ENCODE measurements at regions of chr15 and their contacts with region 1.

Region 1: GRCh38 chr15:65869127-65869953 is at the start of gene RAB11A:
- DNase-seq: peak; percentile 90 to 97
- H3K4me3 ChIP-seq: peak within 1 kb of the TSS; percentile 85 to 99 (median 92)
- H3K27ac ChIP-seq: peak within 1 kb of the TSS; percentile 92
- H3K4me1 ChIP-seq: peaks cover 0 to 2% (median 0%) of the 10 kb centered on the region in 4 experiments; a peak in 2 of 7 replicates
- H3K27me3 ChIP-seq: no peaks in the 10 kb centered on the region
- CTCF ChIP-seq: peak; percentile 28 to 31 (median 30); a peak in 3 of 4 replicates
- EP300 ChIP-seq: no peak
- POLR2A ChIP-seq: peak; percentile 95 to 99
- RAD21 ChIP-seq: peak; percentile 16 to 17; a peak in 1 of 4 replicates
- total RNA-seq, gene RAB11A: 247 and 254 TPM in 2 replicates

Region 2: DNA sequence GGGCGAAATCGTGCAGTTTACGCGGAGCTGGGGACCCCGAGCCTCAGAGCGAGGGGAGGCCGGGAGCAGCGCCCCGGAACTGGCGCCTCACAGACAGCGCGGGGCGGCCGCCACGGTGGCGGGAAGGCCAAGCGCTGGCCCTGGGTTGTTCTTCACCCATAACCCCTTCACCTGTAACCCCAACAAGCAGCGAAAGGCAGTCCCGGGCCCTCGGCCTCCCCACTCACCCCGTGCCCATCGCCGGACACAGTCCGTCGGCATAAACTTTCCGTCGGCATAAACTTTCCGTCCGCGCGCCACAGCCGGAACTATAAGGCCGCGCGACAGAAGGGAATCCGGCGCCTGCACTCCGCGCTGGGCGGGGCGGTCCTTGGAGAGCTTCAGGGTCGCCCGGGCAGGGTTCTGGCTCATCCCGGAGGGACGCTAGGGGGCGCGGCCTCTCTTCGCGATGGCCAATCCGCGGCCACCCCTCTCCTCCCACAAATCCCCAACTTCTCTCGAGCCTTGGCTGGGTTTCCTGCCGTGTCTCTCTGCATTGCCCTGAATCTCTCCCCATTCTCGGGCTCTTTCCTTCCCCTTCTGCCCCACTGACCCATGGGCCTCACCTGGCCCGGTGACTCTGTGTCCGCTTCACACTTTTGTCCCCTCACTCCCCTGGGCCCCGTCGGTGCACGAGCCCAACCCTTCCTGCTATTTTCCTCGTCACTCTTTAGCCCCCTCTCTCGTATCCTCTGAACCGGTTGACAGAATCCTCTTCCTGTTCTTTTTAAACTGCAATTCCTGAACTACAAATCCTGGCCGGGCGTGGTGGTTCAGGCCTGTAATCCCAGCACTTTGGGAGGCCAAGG is 258.2 kb before region 1 on chr15 and contains the start of gene INTS14:
- CTCF ChIA-PET with region 1: interaction called, 3 read pairs
- POLR2A ChIA-PET with region 1: interaction called, 19 read pairs
- DNase-seq: peak; percentile 89 to 98
- H3K4me3 ChIP-seq: peak within 1 kb of the TSS; percentile 80 to 98 (median 93)
- H3K27ac ChIP-seq: peak within 1 kb of the TSS; percentile 93
- H3K4me1 ChIP-seq: peaks cover 6 to 8% (median 8%) of the 10 kb centered on the region in 4 experiments; a peak in 6 of 7 replicates
- H3K27me3 ChIP-seq: no peaks in the 10 kb centered on the region
- CTCF ChIP-seq: peak; percentile 67 to 70 (median 68)
- EP300 ChIP-seq: peak in 1 of 2 experiments; percentile 77; a peak in 1 of 3 replicates
- POLR2A ChIP-seq: peak; percentile 83 to 98
- RAD21 ChIP-seq: peak; percentile 59 to 66
- total RNA-seq, gene INTS14: 32.4 and 33.7 TPM in 2 replicates

Region 3: DNA sequence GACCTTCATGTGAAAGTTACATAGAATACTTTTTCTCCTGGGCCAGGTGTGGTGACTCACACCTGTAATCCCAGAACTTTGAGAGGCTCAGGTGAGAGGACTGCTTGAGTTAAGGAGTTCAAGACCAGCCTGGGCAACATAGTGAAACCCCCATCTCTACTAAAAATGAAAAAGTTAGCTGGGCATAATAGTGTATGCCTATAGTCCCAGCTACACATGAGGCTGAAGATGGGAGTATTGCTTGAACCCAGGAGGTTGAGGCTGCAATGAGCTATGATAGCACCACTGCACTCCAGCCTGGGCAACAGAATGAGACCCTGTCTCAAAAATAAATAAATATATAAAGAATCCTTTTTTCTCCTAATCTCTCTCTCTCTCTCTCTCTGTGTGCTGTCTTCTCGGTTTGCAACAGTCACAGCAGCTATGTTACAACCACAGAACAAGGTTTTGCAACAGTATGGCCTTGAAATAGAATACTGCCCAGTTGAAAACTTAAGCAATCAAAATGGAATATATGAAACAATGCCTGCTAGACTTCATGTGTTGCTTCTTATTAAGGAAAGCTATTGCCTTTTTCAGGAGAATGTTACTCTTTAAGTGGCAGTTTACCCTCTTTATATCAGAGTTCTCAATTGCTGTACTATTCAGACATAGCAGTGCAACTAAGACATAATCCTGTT is 64.9 kb before region 1 on chr15:
- CTCF ChIA-PET with region 1: no interaction called
- POLR2A ChIA-PET with region 1: no interaction called
- DNase-seq: no peak
- H3K4me3 ChIP-seq: no peak overlapping the region
- H3K27ac ChIP-seq: no peak overlapping the region
- H3K4me1 ChIP-seq: peaks cover 0 to 5% (median 0%) of the 10 kb centered on the region in 4 experiments; a peak in 1 of 7 replicates
- H3K27me3 ChIP-seq: no peaks in the 10 kb centered on the region
- CTCF ChIP-seq: no peak
- EP300 ChIP-seq: no peak
- POLR2A ChIP-seq: no peak
- RAD21 ChIP-seq: no peak

Region 4: GRCh38 chr15:65832549-65833364 is 36.6 kb before region 1 on chr15:
- CTCF ChIA-PET with region 1: interaction called, 13 read pairs
- POLR2A ChIA-PET with region 1: interaction called, 16 read pairs
- DNase-seq: peak; percentile 74 to 78
- H3K4me3 ChIP-seq: peak overlapping the region in 1 of 4 experiments; percentile 40; a peak in 2 of 8 replicates
- H3K27ac ChIP-seq: peak overlapping the region; percentile 78
- H3K4me1 ChIP-seq: peaks cover 4 to 23% (median 7%) of the 10 kb centered on the region in 4 experiments; a peak in 6 of 7 replicates
- H3K27me3 ChIP-seq: no peaks in the 10 kb centered on the region
- CTCF ChIP-seq: peak in 1 of 3 experiments; percentile 14; a peak in 1 of 4 replicates
- EP300 ChIP-seq: peak in 1 of 2 experiments; percentile 68; a peak in 1 of 3 replicates
- POLR2A ChIP-seq: peak; percentile 18 to 61
- RAD21 ChIP-seq: peak in 1 of 2 experiments; percentile 20; a peak in 1 of 4 replicates